IMR-90 (cell line): ENCODE measurements at regions of chr16 and their contacts with region 1.

Region 1: DNA sequence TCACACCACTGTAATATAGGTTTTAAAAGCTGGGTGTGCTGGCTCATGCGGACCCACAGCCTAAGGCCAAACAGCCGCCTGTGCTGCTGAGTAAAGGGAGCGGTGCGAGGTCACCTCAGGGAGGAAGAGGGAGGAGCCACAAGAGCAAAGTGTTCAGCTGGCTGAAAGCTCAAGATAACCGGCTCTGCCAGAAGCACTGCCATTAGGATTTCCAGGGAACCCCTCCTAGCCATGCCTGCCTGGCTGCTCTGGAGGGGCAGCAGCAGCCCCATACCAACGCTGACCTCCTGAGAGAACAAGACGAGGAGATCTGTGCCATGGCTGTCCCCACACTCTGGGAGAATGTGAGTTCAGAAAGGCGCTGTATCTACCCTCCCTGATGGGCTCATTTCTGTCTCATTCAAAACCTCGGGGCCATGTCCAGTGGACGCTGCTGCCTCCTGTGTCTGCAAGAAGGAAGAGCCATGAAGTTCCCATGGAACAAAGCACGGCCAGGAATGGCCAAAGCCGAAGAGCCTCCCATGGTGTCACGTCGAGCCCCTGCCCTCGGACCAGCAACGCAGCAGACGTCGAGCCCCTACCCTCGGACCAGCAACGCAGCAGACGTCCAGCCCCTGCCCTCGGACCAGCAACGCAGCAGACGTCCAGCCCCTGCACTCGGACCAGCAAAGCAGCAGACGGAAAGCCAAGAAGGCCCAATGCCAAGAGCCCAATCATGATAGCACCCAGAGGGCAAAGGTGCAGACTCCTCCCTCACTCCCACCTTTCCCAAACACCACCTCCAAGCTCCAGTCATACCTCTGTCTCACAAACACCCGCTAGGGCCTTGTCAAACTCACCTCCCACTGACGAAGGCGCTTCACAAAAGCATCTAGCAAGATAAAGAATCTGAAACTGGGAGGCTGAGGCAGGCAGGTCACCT is 107.0 kb downstream of the ANKRD11 start:
- DNase-seq: peak; percentile 47
- ATAC-seq: peak; percentile 80
- H3K4me3 ChIP-seq: no peak overlapping the region
- H3K27ac ChIP-seq: no peak overlapping the region
- H3K4me1 ChIP-seq: peaks cover 14% of the 10 kb centered on the region
- H3K27me3 ChIP-seq: no peaks in the 10 kb centered on the region
- CTCF ChIP-seq: no peak
- POLR2A ChIP-seq: no peak
- RAD21 ChIP-seq: no peak

Region 2: GRCh38 chr16:89431158-89431584 is 47.8 kb after region 1 on chr16:
- CTCF ChIA-PET with region 1: no interaction called
- POLR2A ChIA-PET with region 1: no interaction called
- dilution Hi-C with region 1: no loop called
- in situ Hi-C with region 1: no loop called
- intact Hi-C with region 1: loop called (anchors 2 kb)
- DNase-seq: peak; percentile 96
- ATAC-seq: peak; percentile 96
- H3K4me3 ChIP-seq: peak overlapping the region; percentile 11; the same call in 1 of the 2 replicates
- H3K27ac ChIP-seq: peak overlapping the region; percentile 27; the same call in 1 of the 2 replicates
- H3K4me1 ChIP-seq: peaks cover 25% of the 10 kb centered on the region
- H3K27me3 ChIP-seq: no peaks in the 10 kb centered on the region
- CTCF ChIP-seq: no peak
- POLR2A ChIP-seq: no peak; the same call in 1 of the 2 replicates
- RAD21 ChIP-seq: no peak

Region 3: GRCh38 chr16:89534252-89534756 is 151.0 kb after region 1 on chr16:
- CTCF ChIA-PET with region 1: no interaction called
- POLR2A ChIA-PET with region 1: no interaction called
- dilution Hi-C with region 1: no loop called
- in situ Hi-C with region 1: no loop called
- intact Hi-C with region 1: no loop called
- DNase-seq: no peak
- ATAC-seq: peak; percentile 62; the same call in 1 of the 2 replicates
- H3K4me3 ChIP-seq: no peak overlapping the region
- H3K27ac ChIP-seq: no peak overlapping the region
- H3K4me1 ChIP-seq: no peaks in the 10 kb centered on the region
- H3K27me3 ChIP-seq: no peaks in the 10 kb centered on the region
- CTCF ChIP-seq: no peak
- POLR2A ChIP-seq: no peak
- RAD21 ChIP-seq: no peak

Region 4: DNA sequence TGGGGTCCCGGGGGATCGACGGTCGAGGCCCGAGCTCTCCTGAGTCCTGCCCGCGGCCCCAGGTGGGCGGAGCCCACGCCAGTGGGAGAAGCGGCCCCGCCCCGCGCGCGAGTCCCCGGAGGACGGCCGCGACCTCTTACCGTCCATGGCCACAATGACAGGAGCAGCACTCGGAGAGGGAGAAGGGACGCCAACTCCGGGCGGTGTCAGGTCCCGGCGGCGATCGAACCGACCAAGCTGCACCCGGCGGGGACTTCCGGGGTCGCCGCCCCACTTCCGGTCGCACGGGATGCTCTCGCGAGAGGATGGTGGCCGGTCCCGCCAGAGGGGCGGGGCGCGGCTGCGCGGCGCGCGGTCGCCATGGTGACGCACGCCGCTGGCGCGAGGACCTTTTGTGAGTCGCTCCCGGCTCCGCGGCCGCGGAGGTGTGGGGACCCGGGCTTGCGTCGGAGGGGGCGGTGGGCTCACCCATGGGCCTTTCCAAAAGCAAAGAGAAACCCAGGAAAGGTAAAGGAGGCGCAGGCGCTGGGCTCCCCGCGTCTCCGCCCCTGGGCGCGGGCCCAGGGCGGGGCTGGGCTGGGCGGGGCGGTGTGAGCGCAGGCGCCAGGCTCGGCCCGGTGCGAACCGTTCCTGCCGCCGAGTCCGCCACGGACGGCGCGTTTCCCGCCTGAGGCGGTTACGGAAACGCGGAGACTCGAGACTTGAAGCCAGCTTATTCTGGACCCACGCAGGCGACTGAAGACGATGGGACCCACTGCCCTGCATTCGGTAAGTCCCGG is 274.3 kb after region 1 on chr16 and contains the starts of genes CHMP1A and SPATA33:
- CTCF ChIA-PET with region 1: no interaction called
- POLR2A ChIA-PET with region 1: no interaction called
- dilution Hi-C with region 1: no loop called
- in situ Hi-C with region 1: no loop called
- intact Hi-C with region 1: no loop called
- DNase-seq: peak; percentile 81
- ATAC-seq: peak; percentile 96
- H3K4me3 ChIP-seq: peak within 1 kb of the TSS; percentile 87
- H3K27ac ChIP-seq: peak within 1 kb of the TSS; percentile 98
- H3K4me1 ChIP-seq: peaks cover 7% of the 10 kb centered on the region
- H3K27me3 ChIP-seq: no peaks in the 10 kb centered on the region
- CTCF ChIP-seq: no peak
- POLR2A ChIP-seq: peak; percentile 78
- RAD21 ChIP-seq: no peak
- total RNA-seq, gene CHMP1A: 99.8 and 113 TPM in 2 replicates
- total RNA-seq, gene SPATA33: 0.90 and 1.1 TPM in 2 replicates